ENCODE measurements at regions of chr14 and their contacts with region 1.

Region 1: GRCh38 chr14:105589161-105590062 is 63.0 kb downstream of the TMEM121 start:
- DNase-seq: no peak
- ATAC-seq: peak in 1 of 2 donors; percentile 20

Region 2: DNA sequence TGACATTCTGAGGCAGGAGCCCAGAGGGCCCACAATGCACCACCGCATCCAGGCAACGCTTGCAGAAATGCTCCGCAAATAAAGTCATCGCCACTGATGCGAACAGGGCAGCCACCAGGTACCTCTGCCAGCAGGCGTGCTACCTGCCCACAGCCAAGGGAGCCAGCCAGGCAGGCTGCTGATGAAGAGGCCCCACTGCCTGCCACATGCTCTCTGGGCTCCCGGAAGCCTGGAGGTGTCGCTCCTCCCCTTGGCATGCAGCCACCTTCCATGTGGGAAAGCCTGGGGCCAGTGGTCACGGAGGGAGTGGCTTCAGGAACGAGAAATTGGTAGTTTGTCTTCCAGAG is 538.9 kb before region 1 on chr14:
- intact Hi-C with region 1: no loop called
- DNase-seq: peak; percentile 57
- ATAC-seq: no peak

Region 3: DNA sequence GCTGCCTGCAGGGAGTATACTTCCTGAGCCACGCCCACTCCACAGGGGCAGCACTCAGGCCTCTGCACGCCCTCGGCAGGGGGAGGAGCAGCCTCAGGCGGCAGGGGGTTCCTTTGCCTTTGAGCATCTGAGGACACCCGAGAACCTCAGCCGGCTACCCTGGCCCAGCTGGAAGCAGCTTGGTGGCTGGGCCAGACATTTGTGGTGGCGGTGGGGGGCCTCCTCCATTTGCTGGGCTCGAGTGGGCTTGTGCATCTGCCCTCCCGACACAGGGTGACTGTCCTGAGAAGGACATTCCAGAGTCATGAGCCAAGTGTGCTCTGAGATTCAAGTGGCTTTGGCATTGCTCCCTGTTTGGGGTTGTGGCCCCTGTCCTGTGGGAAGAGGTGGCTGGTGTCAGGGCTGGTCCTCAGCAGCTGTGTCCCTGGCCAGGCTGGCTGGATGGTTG is 123.8 kb before region 1 on chr14:
- intact Hi-C with region 1: no loop called
- DNase-seq: peak; percentile 71
- ATAC-seq: peak; percentile 52 to 55

Region 4: GRCh38 chr14:105690692-105691091 is 101.3 kb after region 1 on chr14:
- intact Hi-C with region 1: no loop called
- DNase-seq: no peak
- ATAC-seq: no peak

Region 5: DNA sequence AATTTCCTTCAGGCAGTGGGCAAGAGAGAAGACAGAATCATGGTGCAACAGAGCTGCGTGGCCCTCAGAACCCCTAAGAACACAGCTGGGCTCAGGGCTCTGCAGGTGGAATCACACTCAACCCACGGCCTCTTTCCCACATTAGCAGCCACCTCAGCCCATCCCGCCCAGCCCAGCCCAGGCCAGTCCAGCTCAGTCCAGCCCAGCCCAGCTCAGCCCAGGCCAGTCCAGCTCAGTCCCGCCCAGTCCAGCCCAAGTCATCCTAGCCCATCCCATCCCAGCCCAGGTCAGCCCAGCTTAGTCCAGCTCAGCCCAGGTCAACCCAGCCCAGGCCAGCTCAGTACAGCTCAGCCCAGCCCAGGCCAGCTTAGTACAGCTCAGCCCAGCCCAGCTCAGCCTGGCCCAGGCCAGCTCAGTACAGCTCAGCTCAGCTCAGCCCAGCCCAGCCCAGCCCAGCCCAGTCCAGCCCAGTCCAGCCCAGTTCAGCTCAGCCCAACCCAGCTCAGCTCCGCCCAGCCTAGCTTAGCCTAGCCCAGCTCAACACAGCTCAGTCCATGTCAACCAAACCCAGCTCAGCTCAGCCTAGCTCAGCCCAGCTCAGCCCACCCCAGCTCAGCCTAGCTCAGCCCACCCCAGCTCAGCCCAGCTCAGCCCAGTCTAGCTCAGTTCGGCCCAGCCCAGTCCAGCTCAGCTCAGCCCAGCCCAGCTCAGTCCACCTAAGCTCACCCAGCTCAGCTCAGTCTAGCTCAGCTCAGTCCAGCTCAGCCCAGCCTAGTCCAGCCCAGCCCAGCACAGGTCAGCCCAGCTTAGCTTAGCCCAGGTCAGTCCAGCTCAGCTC is 120.1 kb after region 1 on chr14:
- intact Hi-C with region 1: loop called (anchors 5 kb)
- DNase-seq: no peak
- ATAC-seq: no peak

Region 6: DNA sequence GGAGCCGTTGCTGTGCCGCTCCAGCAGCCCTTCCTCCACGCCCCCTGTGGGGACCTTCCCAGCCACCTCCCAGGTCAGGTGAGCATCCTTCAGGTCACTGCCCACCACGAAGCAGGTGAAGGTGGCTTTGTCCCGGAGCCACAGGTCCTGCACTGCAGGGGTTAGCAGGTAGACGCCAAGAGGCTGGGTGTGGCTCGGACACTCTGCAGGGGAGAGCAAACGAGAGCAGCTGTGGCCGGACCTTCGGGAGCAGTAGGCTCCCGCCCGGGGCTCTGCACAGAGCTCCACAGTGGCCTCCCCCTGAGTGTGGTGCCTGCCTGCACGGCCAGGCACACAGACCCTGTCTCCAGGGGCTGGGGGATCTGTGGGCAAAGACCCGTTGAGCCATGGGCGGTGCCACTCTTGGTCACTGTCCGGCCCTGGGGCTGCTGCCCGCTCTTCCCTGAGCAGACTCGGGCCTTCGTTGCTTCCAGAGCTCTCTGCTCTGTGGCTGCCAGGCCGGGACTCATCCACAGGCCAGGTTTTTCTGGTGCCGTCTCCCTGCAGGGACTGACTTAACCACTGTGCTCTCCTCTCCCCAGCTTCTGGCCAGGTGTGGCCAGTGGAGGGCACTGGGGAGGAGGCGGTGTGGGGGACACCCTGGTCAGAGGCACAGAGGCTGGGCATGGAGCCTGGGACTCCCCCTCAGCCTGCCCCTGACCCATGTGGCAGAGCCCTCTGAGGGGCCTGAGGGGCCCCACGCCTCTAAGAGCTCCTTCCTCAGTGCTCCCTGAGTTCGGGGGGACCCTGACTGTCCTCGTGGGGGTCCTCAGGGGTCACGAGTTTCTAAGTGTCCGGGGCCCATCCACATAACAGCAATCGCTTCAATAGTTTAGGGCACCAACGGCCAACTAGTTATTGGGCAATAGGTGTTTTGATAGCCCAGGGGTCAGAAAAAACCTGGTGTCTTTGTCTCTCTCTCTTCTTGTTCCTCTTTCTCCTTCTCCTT is 251.9 kb after region 1 on chr14:
- intact Hi-C with region 1: no loop called
- DNase-seq: peak; percentile 16
- ATAC-seq: no peak